ENCODE measurements at regions of chr2 and their contacts with region 1.

Region 1: DNA sequence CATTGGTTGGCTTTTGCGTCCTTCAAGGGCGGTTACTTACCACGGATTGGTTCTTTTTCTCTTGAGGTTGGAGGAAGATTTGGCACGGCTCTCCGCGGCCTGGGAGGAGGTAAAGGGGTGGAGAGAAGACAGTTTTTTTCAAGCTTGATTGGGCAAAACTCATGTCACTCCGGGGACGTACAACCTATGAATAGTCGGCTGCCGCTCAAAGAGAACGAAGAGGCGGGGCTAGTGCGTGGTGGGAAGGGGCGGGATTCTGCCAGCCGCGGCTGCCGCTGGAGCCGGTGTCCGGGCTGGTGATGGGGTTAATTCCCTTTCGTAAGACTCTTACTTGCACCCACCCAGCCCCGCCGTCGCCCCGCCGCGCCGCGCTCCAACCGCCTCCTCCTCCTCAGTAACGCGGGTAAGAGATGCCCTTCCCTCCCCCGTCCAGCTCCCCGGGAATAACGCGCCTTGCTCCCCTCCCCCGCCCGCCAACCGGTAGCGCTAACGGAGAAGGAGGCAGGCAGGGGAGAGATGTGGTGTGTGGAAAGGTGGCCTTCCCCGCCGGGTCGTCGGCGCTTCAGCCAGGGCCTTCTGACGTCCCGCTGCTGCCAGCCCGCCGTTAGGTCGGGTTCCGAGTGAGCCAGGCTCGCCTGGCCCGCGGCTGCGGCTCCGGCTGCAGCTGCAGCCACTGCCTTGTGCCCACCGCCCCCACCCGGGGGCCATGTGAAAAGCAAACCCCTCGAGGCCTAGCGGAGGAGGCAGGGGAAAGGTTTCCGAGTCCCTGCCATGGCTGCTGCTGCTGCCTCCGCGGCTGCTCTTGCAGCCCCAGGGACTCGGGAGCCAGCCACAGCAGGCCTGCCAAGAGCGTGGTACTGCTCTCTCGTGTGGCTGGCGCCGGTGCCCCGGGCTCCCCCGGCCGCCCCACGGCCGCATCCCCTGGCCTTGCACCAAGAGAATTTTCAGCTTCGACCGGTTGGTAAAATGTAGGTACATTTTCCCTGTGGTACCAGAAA is at the start of gene R3HDM1:
- DNase-seq: peak; percentile 97
- ATAC-seq: peak; percentile 85
- H3K4me3 Mint-ChIP-seq: no peak within 1 kb of the TSS
- H3K27ac Mint-ChIP-seq: no peak within 1 kb of the TSS
- H3K4me1 Mint-ChIP-seq: peaks cover 33% of the 10 kb centered on the region
- H3K27me3 Mint-ChIP-seq: no peaks in the 10 kb centered on the region
- CTCF ChIP-seq: no peak
- total RNA-seq, gene R3HDM1: 66.5 to 75.8 TPM

Region 2: GRCh38 chr2:134918526-134919340 is 612.8 kb before region 1 on chr2 and contains the start of gene CCNT2:
- CTCF ChIA-PET with region 1: no interaction called
- POLR2A ChIA-PET with region 1: interaction called, 7 read pairs
- intact Hi-C with region 1: loop called (anchors 2 kb)
- DNase-seq: peak; percentile 99
- ATAC-seq: peak; percentile 88
- H3K4me3 Mint-ChIP-seq: peak within 1 kb of the TSS; percentile 82
- H3K27ac Mint-ChIP-seq: peak within 1 kb of the TSS; percentile 97
- H3K4me1 Mint-ChIP-seq: peaks cover 30% of the 10 kb centered on the region
- H3K27me3 Mint-ChIP-seq: peaks cover 2% of the 10 kb centered on the region
- CTCF ChIP-seq: no peak
- total RNA-seq, gene CCNT2: 30.5 to 32.1 TPM

Region 3: GRCh38 chr2:135023886-135024485 is 507.5 kb before region 1 on chr2:
- CTCF ChIA-PET with region 1: no interaction called
- POLR2A ChIA-PET with region 1: no interaction called
- intact Hi-C with region 1: loop called (anchors 10 kb)
- DNase-seq: peak; percentile 4
- ATAC-seq: peak; percentile 66
- H3K4me3 Mint-ChIP-seq: peak overlapping the region; percentile 14
- H3K27ac Mint-ChIP-seq: peak overlapping the region; percentile 26
- H3K4me1 Mint-ChIP-seq: peaks cover 19% of the 10 kb centered on the region
- H3K27me3 Mint-ChIP-seq: no peaks in the 10 kb centered on the region
- CTCF ChIP-seq: no peak

Region 4: DNA sequence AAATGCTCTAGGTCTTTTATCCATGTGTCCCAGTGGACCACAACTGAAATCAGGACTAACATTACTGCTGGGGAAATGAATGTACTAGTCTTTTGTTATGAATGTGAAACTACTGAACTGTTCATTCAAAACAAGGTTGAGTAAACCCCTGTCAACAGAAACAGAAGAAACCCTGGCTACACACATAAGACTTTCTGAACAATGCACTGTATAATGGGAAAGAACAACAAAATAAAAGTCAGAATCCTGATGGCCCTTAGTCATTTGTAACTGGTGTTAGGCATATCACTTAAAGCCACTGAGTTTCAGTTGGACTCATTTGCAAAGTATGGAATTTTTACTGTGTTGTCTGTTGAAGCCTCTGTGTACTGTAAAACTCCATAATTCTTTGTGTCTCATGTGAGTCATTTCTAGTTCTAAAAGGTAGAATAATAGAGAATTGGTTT is 133.1 kb after region 1 on chr2:
- CTCF ChIA-PET with region 1: no interaction called
- POLR2A ChIA-PET with region 1: no interaction called
- intact Hi-C with region 1: no loop called
- DNase-seq: no peak
- ATAC-seq: peak; percentile 60
- H3K4me3 Mint-ChIP-seq: no peak overlapping the region
- H3K27ac Mint-ChIP-seq: no peak overlapping the region
- H3K4me1 Mint-ChIP-seq: peaks cover 40% of the 10 kb centered on the region
- H3K27me3 Mint-ChIP-seq: no peaks in the 10 kb centered on the region
- CTCF ChIP-seq: no peak

Region 5: GRCh38 chr2:135701442-135701841 is 169.9 kb after region 1 on chr2:
- CTCF ChIA-PET with region 1: no interaction called
- POLR2A ChIA-PET with region 1: no interaction called
- intact Hi-C with region 1: no loop called
- DNase-seq: no peak
- ATAC-seq: peak; percentile 47
- H3K4me3 Mint-ChIP-seq: no peak overlapping the region
- H3K27ac Mint-ChIP-seq: no peak overlapping the region
- H3K4me1 Mint-ChIP-seq: no peaks in the 10 kb centered on the region
- H3K27me3 Mint-ChIP-seq: no peaks in the 10 kb centered on the region
- CTCF ChIP-seq: no peak

Measured in activated CD8-positive, alpha-beta T cell treated with anti-CD3 and anti-CD28 coated beads for 36 hours (primary cell).